Dorsolateral prefrontal cortex (tissue), 120 donors: ENCODE measurements at regions of chr2 and their contacts with region 1.

Region 1: GRCh38 chr2:27697660-27698059 is 34.0 kb downstream of the SLC4A1AP start:
- DNase-seq: no peak
- H3K4me3 ChIP-seq: no peak overlapping the region
- H3K27ac ChIP-seq: no peak overlapping the region
- H3K27me3 ChIP-seq: no peaks in the 10 kb centered on the region
- CTCF ChIP-seq: no peak

Region 2: GRCh38 chr2:27715318-27716210 is 17.9 kb after region 1 on chr2:
- intact Hi-C with region 1: loop called in 1 of 2 experiments (anchors 2 kb)
- DNase-seq: peak in 6 of 10 donors; percentile 38 to 64 (median 55)
- H3K4me3 ChIP-seq: peak overlapping the region; percentile 32 to 71 (median 55)
- H3K27ac ChIP-seq: peak overlapping the region in 56 of 59 donors; percentile 29 to 89 (median 74)
- H3K27me3 ChIP-seq: no peaks in the 10 kb centered on the region
- CTCF ChIP-seq: no peak